ENCODE measurements at regions of chr3 and their contacts with region 1.

Region 1: GRCh38 chr3:44077246-44077645 is 164.4 kb upstream of the TOPAZ1 start:
- DNase-seq: no peak

Region 2: DNA sequence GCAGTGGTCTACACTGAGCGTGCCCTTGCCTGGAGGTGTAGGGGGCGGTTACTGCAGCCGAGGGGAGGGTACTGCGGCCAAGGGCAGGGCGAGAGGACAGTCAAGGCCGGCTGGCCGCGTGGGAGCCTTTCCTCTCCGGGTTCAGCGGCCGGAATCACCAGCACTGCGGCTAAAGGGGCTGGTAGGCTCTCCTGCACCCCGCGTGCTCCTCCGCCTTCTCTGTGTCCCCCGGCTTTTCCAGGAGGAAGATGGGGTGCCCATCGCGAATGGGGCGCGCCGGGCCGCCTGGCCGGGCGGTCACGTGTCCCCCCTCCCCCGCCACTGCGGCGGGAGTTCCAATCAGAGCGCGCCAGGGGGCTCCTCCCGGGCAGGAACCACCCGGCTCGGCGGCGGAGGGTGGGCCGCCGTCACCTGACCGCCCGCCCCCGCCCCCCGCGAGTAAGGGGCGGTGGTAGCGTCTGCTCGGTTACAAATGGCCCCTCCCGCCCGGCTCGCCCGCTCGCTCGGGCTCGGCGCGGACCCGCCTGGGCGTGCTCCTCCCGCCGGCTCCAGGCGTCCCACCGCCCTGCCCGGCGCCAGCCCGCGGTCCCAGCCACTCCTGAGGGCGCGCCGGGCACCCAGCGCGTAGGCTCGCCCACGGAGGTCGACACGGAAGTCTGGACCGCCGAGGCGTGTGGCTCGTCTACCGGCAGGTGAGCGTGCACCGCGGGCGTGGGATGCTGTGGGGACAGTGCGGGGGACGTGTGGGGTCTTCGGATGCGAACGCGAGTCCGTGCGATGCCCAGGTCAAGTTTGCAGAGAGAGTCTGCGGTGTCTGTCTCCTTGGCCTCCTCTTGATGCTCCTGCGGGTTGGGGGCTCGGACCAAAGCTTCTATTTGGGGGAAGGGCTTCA is 78.2 kb before region 1 on chr3:
- intact Hi-C with region 1: no loop called
- DNase-seq: peak; percentile 79

Region 3: DNA sequence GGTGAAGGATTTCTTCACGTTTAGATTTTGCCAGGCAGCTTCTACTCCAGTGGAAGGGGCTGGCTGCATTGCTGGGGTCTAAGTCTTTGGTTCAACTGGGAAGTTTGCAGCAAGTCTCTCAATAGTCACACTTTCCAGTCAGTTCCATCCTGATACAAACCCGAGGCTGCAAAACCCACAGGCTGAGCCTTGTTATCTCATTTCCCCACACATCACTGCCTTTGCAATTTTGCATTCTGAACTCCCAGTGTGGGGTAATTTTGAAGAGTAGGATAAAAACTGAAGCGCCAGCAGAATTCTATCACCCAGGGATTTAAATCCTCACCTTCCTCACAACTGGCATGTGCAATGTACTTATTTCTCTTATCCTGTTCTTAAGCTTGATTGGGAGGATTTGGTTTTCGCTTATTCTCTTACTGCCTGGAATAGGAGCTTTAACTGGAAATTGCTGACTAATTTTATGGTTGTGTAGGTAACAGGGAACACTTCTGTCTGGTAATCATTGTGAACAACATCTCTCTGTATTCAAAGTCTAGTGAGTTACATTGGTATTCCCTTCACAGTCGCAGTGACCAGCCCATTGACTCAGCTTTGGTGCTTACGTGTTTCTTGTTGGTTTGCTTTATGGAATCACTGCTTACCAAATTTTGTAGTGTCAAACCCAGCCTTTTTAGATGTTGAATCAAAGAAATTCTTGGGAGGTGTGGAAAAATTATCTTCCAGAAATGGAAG is 22.5 kb after region 1 on chr3:
- intact Hi-C with region 1: loop called in 1 of 2 experiments (anchors 1 kb)
- DNase-seq: no peak